ENCODE measurements at regions of chr7 and their contacts with region 1.

Region 1: GRCh38 chr7:23105644-23106056 is at the start of gene KLHL7:
- DNase-seq: peak; percentile 95
- H3K4me3 Mint-ChIP-seq: peak within 1 kb of the TSS; percentile 94
- H3K27ac Mint-ChIP-seq: peak within 1 kb of the TSS; percentile 96
- H3K4me1 Mint-ChIP-seq: peaks cover 34% of the 10 kb centered on the region
- H3K27me3 Mint-ChIP-seq: no peaks in the 10 kb centered on the region
- CTCF ChIP-seq: no peak
- total RNA-seq, gene KLHL7: 17.9 and 19.1 TPM in 2 replicates

Region 2: DNA sequence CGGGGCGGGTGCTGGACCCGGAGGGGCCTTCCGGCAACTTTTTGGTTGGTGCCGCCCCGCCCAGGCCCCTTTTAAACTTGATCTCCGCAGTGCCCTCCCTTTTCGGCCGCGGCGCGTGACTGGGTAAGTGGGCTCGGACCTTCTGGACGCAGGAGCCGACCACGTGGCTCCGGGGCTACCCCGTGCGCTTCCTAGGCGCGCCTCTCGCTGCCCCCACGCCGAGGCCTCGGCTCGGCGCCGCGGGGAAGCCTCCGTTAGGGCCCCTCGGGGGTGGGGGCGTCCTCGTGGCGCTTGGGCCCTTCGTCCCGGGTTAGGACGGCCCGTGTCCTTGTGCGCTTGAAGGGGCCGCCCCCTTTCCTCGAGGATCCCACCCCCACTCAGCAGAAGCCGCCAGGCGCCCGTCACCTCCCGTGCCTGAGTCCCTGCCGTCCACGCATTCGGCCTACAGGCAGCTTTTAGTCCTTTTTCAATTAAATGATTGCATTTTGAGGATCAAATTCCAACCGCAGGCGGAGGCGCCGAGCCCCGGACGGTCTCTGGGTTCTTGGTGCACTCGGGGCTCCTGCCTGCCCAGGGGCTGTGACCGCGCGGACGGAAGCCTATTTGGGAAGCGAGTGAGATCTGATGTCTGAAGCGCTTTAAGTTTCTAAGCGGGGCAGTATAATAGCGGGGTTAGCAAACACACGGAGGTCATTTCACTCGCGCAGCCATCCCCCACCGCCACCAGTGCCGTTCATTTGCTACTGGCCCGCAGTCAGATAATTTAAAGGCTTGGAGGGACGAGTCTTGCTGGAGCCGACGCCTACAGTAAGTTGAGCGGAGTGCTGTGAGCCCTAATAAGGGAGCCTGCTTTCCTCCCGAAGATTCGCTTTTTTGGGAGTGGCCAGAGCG is 251.2 kb before region 1 on chr7:
- CTCF ChIA-PET with region 1: interaction called, 3 read pairs
- POLR2A ChIA-PET with region 1: interaction called, 15 read pairs
- intact Hi-C with region 1: no loop called
- DNase-seq: peak; percentile 91
- H3K4me3 Mint-ChIP-seq: peak overlapping the region; percentile 90
- H3K27ac Mint-ChIP-seq: peak overlapping the region; percentile 52
- H3K4me1 Mint-ChIP-seq: peaks cover 19% of the 10 kb centered on the region
- H3K27me3 Mint-ChIP-seq: no peaks in the 10 kb centered on the region
- CTCF ChIP-seq: peak; percentile 86

Region 3: GRCh38 chr7:23123007-23123406 is 17.4 kb after region 1 on chr7:
- CTCF ChIA-PET with region 1: interaction called, 4 read pairs
- POLR2A ChIA-PET with region 1: interaction called, 55 read pairs
- intact Hi-C with region 1: no loop called
- DNase-seq: no peak
- H3K4me3 Mint-ChIP-seq: no peak overlapping the region
- H3K27ac Mint-ChIP-seq: no peak overlapping the region
- H3K4me1 Mint-ChIP-seq: no peaks in the 10 kb centered on the region
- H3K27me3 Mint-ChIP-seq: no peaks in the 10 kb centered on the region
- CTCF ChIP-seq: no peak

Region 4: DNA sequence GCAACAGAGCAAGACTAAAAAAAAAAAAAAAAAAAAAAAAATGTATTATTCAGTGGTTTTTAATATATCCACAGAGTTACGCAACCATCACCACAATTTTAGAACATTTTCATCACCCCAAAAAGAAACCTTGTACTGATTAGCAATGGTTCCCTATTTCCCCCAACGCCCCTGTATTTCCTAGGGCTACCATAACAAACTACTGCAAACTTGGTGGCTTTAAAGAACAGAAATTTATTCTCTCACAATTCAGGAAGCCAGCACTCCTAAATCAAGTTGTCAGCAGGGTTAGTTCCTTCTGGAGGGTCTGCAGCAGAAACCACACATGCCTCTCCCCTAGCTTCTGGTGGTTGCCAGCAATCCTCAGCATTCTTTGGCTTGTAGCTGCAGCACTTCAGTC is 70.3 kb after region 1 on chr7:
- CTCF ChIA-PET with region 1: interaction called, 4 read pairs
- POLR2A ChIA-PET with region 1: interaction called, 99 read pairs
- intact Hi-C with region 1: no loop called
- DNase-seq: no peak
- H3K4me3 Mint-ChIP-seq: no peak overlapping the region
- H3K27ac Mint-ChIP-seq: no peak overlapping the region
- H3K4me1 Mint-ChIP-seq: no peaks in the 10 kb centered on the region
- H3K27me3 Mint-ChIP-seq: no peaks in the 10 kb centered on the region
- CTCF ChIP-seq: no peak

Region 5: DNA sequence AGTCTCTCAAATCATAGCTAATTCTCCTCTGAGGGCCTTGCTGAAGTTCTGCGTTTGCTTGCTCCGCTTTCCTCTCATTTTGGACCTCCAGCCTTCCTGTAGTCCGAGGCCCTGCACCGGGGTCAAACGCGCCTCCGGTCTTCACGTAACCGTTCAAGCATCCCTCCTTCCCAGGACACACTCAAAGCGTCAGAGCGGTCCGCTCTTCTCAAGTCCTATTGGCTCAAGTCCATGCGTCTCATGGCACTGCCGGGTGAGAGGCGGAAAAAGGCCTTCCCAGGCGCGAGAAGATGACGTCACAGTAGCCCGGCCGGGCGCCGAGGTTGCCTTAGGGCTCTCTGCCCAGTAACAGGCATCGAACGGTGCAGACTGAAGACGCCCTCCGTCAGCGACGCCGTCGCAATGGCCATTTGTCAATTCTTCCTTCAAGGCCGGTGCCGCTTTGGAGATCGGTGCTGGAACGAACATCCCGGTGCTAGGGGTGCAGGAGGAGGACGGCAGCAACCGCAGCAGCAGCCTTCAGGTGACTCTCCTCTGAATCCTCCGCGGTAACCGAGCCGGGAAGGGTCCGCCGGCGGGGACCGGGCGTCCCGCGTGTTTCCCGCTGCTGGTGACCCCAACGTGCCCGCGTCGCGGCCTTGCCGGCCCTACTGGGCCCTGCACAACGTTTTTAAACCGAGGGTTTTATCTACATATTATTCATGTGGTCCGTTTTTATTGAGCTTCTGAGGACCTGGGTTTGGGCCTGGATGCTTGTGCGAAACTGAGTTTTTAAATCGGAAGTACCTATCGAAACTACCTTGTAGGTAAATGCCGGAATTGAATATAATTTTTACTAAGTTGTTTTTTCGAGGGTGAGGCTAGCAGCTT is 76.3 kb after region 1 on chr7 and contains the start of gene NUP42:
- CTCF ChIA-PET with region 1: interaction called, 6 read pairs
- POLR2A ChIA-PET with region 1: interaction called, 99 read pairs
- intact Hi-C with region 1: loop called (anchors 1 kb)
- DNase-seq: peak; percentile 98
- H3K4me3 Mint-ChIP-seq: peak within 1 kb of the TSS; percentile 90
- H3K27ac Mint-ChIP-seq: peak within 1 kb of the TSS; percentile 96
- H3K4me1 Mint-ChIP-seq: peaks cover 17% of the 10 kb centered on the region
- H3K27me3 Mint-ChIP-seq: no peaks in the 10 kb centered on the region
- CTCF ChIP-seq: no peak
- total RNA-seq, gene NUP42: 41.3 and 42.0 TPM in 2 replicates

Measured in MCF 10A (cell line).